Activated B cell treated with CpG ODN at 0.5 μM for 24 hours (primary cell): ENCODE measurements at regions of chr3 and their contacts with region 1.

Region 1: GRCh38 chr3:112247900-112248299 is 46.1 kb downstream of the SLC9C1 start:
- DNase-seq: no peak
- ATAC-seq: no peak
- H3K4me3 Mint-ChIP-seq: no peak overlapping the region
- H3K27ac Mint-ChIP-seq: no peak overlapping the region
- H3K4me1 Mint-ChIP-seq: peaks cover 21% of the 10 kb centered on the region
- H3K27me3 Mint-ChIP-seq: no peaks in the 10 kb centered on the region
- CTCF ChIP-seq: no peak

Region 2: GRCh38 chr3:112167758-112168157 is 80.1 kb before region 1 on chr3:
- CTCF ChIA-PET with region 1: no interaction called
- POLR2A ChIA-PET with region 1: no interaction called
- intact Hi-C with region 1: loop called (anchors 5 kb)
- DNase-seq: no peak
- ATAC-seq: peak; percentile 79
- H3K4me3 Mint-ChIP-seq: no peak overlapping the region
- H3K27ac Mint-ChIP-seq: no peak overlapping the region
- H3K4me1 Mint-ChIP-seq: peaks cover 18% of the 10 kb centered on the region
- H3K27me3 Mint-ChIP-seq: no peaks in the 10 kb centered on the region
- CTCF ChIP-seq: no peak

Region 3: DNA sequence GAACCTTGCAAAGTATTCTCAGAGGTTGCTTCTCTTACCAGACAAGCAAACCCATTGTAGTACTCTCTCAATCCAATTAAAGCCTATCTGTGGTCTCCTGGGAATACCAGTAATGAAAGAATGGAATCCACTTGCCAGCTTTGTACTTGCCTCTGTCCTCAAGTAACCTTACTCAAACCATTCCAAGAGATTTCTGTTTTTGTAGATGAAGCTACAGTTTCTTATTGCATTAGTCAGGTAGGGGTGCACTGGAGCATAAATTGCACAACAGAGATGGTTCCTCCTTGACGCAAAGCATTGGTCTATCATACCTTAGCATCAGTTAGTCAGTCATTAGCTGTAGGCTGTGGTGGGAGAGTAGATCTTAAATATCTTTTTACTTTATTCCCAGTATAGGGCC is 198.4 kb after region 1 on chr3:
- CTCF ChIA-PET with region 1: no interaction called
- POLR2A ChIA-PET with region 1: no interaction called
- intact Hi-C with region 1: no loop called
- DNase-seq: no peak
- ATAC-seq: peak; percentile 71
- H3K4me3 Mint-ChIP-seq: no peak overlapping the region
- H3K27ac Mint-ChIP-seq: peak overlapping the region; percentile 4
- H3K4me1 Mint-ChIP-seq: peaks cover 39% of the 10 kb centered on the region
- H3K27me3 Mint-ChIP-seq: no peaks in the 10 kb centered on the region
- CTCF ChIP-seq: no peak

Region 4: DNA sequence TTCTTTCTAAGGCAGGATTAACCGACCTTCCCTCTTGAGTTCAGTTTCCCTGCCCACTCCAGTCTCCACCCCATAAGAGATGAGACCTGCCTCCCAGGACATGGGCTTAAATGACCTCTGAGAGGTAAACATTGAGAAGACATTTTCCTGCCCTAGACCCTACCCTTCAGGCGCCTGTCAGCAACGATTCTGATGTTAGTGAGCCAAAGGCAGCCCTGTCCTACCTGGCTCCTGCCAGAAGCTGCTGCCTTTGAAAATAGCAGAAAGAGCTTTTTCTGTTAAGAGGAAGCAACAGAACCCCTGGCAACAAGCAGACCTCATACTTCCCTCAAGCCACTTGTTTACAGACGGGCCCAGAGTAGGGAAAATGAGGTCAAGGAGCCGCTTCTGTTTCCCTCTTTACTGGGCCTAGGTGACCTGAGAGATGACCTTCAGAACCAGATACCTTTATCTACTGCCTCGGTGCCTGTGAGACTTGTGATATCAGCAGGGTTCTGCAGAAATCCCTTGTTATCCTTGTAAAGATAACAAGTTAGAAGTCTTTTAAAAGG is 546.8 kb after region 1 on chr3:
- CTCF ChIA-PET with region 1: no interaction called
- POLR2A ChIA-PET with region 1: no interaction called
- intact Hi-C with region 1: no loop called
- DNase-seq: no peak
- ATAC-seq: peak; percentile 31
- H3K4me3 Mint-ChIP-seq: peak overlapping the region; percentile 12
- H3K27ac Mint-ChIP-seq: peak overlapping the region; percentile 46
- H3K4me1 Mint-ChIP-seq: peaks cover 27% of the 10 kb centered on the region
- H3K27me3 Mint-ChIP-seq: no peaks in the 10 kb centered on the region
- CTCF ChIP-seq: no peak